Naive thymus-derived CD4-positive, alpha-beta T cell (primary cell): ENCODE measurements at regions of chr14 and their contacts with region 1.

Region 1: DNA sequence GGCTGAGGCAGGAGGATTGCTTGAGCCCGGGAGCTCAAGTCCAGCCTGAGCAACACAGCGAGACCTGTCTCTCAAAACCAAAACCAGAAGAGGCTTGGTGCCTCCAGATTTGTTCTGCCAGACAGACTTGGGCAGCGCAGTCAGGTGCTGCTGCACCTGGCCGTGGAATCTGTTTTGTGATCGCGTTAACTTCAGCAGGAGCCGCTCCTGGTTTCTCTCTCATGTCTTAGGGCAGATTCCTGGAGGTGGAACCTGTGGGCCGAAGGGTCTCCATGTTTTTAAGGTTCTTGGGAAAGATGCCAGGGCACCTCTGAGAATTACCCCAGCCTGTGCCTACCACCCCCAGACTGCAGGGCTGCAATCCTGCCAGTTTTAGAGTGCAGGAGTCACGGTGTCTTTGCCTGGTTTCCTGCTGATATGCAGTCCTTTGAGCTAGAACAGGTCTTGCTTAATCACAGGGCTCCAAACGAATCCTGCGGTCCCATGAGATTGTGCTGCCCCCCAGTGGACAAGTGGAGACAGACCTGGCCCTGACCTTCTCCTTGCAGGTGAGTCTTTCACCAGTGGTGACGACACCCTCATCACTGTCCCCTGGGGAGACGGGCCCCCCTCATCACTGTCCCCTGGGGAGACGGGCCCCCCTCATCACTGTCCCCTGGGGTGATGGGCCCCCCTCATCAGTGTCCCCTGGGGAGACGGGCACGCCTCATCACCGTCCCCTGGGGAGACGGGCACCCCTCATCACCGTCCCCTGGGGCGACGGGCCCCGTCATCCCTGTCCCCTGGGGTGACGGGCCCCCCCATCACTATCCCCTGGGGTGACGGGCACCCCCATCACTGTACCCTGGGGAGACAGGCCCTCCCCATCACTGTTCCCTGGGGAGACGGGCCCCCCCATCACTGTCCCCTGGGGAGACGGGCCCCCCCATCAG is 37.6 kb downstream of the PACS2 start:
- DNase-seq: peak; percentile 71 to 90 (median 87)
- ATAC-seq: peak; percentile 97
- H3K4me3 ChIP-seq: no peak overlapping the region
- H3K4me3 Mint-ChIP-seq: no peak overlapping the region
- H3K27ac ChIP-seq: no peak overlapping the region
- H3K27ac Mint-ChIP-seq: peak overlapping the region in 1 of 9 donors; percentile 56
- H3K4me1 ChIP-seq: peaks cover 0 to 4% of the 10 kb centered on the region in 2 donors
- H3K4me1 Mint-ChIP-seq: peaks cover 4 to 5% (median 4%) of the 10 kb centered on the region in 7 donors
- H3K27me3 ChIP-seq: no peaks in the 10 kb centered on the region
- H3K27me3 Mint-ChIP-seq: no peaks in the 10 kb centered on the region

Region 2: DNA sequence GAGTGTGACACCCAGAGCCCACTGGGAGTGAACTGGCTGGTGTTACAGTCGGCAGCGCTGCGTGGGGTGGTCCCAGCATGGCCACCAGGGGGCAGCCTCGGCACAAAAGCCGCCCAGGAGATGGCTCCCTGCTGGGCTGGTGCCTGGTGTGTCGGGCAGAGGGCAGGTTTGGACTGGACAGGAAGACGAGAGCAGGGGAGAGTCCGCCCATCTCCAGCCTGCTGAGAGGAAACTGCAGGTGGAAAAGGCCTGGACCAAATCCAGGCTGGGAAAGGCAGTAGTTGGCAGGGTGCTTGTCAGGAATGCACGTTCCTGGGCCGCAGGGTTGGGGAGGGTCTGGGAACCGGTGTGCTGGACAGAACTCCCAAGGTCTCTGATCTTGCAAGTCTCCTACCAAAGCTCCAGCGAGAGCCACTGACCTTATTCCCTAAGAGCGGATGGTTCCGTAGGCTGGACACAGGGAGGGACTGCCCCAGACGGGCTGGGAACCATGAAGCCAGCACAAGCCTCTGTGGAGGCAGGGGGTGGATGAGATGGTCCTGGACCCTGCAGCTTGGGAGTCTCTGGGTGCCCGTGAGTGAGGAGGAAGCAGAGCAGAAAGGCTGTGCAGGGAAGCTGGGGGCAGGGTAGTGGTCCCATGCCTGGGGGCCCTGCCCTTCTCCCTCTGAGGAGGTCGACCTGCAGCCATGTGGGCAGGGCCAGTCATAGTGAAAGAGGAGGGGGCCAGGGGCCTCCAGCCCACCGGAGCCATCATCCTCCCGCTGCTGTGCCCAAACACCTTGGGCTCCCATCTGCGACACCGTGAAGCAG is 375.8 kb before region 1 on chr14:
- CTCF ChIA-PET with region 1: no interaction called
- POLR2A ChIA-PET with region 1: no interaction called
- intact Hi-C with region 1: loop called in 1 of 2 experiments (anchors 1 kb)
- DNase-seq: peak; percentile 67 to 91 (median 83)
- ATAC-seq: peak; percentile 86
- H3K4me3 ChIP-seq: no peak overlapping the region
- H3K4me3 Mint-ChIP-seq: peak overlapping the region; percentile 41 to 92 (median 72)
- H3K27ac ChIP-seq: no peak overlapping the region
- H3K27ac Mint-ChIP-seq: peak overlapping the region in 4 of 9 donors; percentile 3 to 68 (median 33)
- H3K4me1 ChIP-seq: peaks cover 0 to 7% of the 10 kb centered on the region in 2 donors
- H3K4me1 Mint-ChIP-seq: peaks cover 5 to 19% (median 13%) of the 10 kb centered on the region in 7 donors
- H3K27me3 ChIP-seq: peaks cover 0 to 8% of the 10 kb centered on the region in 2 donors
- H3K27me3 Mint-ChIP-seq: peaks cover 8 to 33% (median 16%) of the 10 kb centered on the region in 5 donors

Region 3: DNA sequence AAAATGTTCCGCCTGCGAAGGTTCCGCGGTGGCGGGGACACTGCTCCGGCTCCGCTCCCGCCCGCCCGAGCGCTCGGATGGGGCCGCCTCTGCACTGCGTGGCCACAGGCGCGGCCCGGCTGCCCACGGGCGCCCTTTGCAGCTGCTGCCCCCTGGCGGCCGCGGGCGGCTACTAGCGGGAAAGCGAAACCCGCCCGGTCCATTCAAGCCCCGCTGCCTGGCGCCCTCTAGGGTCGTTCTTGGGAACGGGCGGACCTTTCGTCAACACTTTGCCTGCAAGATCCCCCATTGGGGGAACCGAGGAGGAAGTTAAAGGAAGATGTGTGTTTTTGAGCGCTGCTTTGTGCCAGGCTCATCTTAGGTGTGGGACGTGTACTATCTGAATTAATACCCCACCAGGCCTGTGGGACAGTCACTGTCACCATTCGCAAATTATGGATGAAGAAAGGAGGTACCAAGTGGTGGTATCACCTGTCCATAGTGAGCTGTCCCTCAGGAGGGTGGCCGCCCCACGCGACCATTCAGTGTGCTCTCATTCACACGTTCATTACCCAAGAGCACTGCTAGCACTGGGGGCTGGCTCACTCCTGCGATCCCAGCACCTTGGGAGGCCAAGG is 306.4 kb before region 1 on chr14:
- CTCF ChIA-PET with region 1: no interaction called
- POLR2A ChIA-PET with region 1: no interaction called
- intact Hi-C with region 1: loop called in 1 of 2 experiments (anchors 5 kb)
- DNase-seq: peak; percentile 83 to 96 (median 89)
- ATAC-seq: peak; percentile 98
- H3K4me3 ChIP-seq: no peak overlapping the region
- H3K4me3 Mint-ChIP-seq: peak overlapping the region in 7 of 10 donors; percentile 16 to 56 (median 44)
- H3K27ac ChIP-seq: peak overlapping the region; percentile 46
- H3K27ac Mint-ChIP-seq: peak overlapping the region; percentile 11 to 92 (median 87)
- H3K4me1 ChIP-seq: peaks cover 0 to 9% of the 10 kb centered on the region in 2 donors
- H3K4me1 Mint-ChIP-seq: peaks cover 5 to 14% (median 10%) of the 10 kb centered on the region in 7 donors
- H3K27me3 ChIP-seq: no peaks in the 10 kb centered on the region
- H3K27me3 Mint-ChIP-seq: peaks cover 0 to 7% (median 0%) of the 10 kb centered on the region in 5 donors

Region 4: GRCh38 chr14:105203057-105203531 is 149.1 kb before region 1 on chr14:
- CTCF ChIA-PET with region 1: interaction called, 4 read pairs
- POLR2A ChIA-PET with region 1: no interaction called
- intact Hi-C with region 1: loop called (anchors 1 kb)
- DNase-seq: peak in 6 of 9 donors; percentile 30 to 75 (median 58)
- ATAC-seq: peak; percentile 58
- H3K4me3 ChIP-seq: no peak overlapping the region
- H3K4me3 Mint-ChIP-seq: no peak overlapping the region
- H3K27ac ChIP-seq: no peak overlapping the region
- H3K27ac Mint-ChIP-seq: no peak overlapping the region
- H3K4me1 ChIP-seq: peaks cover 0 to 18% of the 10 kb centered on the region in 2 donors
- H3K4me1 Mint-ChIP-seq: peaks cover 9 to 15% (median 13%) of the 10 kb centered on the region in 7 donors
- H3K27me3 ChIP-seq: peaks cover 0 to 2% of the 10 kb centered on the region in 2 donors
- H3K27me3 Mint-ChIP-seq: peaks cover 6 to 26% (median 12%) of the 10 kb centered on the region in 5 donors

Region 5: GRCh38 chr14:105314287-105315200 is 37.6 kb before region 1 on chr14 and contains the start of gene PACS2:
- CTCF ChIA-PET with region 1: no interaction called
- POLR2A ChIA-PET with region 1: no interaction called
- intact Hi-C with region 1: loop called in 1 of 2 experiments (anchors 1 kb)
- DNase-seq: peak; percentile 64 to 90 (median 86)
- ATAC-seq: peak; percentile 89
- H3K4me3 ChIP-seq: peak within 1 kb of the TSS; percentile 57
- H3K4me3 Mint-ChIP-seq: peak within 1 kb of the TSS; percentile 80 to 98 (median 89)
- H3K27ac ChIP-seq: peak within 1 kb of the TSS; percentile 68
- H3K27ac Mint-ChIP-seq: peak within 1 kb of the TSS; percentile 74 to 95 (median 89)
- H3K4me1 ChIP-seq: peaks cover 13 to 21% of the 10 kb centered on the region in 2 donors
- H3K4me1 Mint-ChIP-seq: peaks cover 9 to 35% (median 23%) of the 10 kb centered on the region in 7 donors
- H3K27me3 ChIP-seq: no peaks in the 10 kb centered on the region
- H3K27me3 Mint-ChIP-seq: peaks cover 0 to 9% (median 0%) of the 10 kb centered on the region in 5 donors
- total RNA-seq, gene PACS2: 33.9 to 75.4 (median 72.3) TPM

Region 6: GRCh38 chr14:105398044-105398725 is 46.0 kb after region 1 on chr14 and contains the start of gene TEX22:
- CTCF ChIA-PET with region 1: no interaction called
- POLR2A ChIA-PET with region 1: no interaction called
- intact Hi-C with region 1: no loop called
- DNase-seq: peak; percentile 75 to 98 (median 84)
- ATAC-seq: peak; percentile 93
- H3K4me3 ChIP-seq: peak within 1 kb of the TSS; percentile 63
- H3K4me3 Mint-ChIP-seq: peak within 1 kb of the TSS; percentile 78 to 95 (median 83)
- H3K27ac ChIP-seq: peak within 1 kb of the TSS; percentile 87
- H3K27ac Mint-ChIP-seq: peak within 1 kb of the TSS; percentile 57 to 95 (median 86)
- H3K4me1 ChIP-seq: peaks cover 20 to 25% of the 10 kb centered on the region in 2 donors
- H3K4me1 Mint-ChIP-seq: peaks cover 6 to 29% (median 18%) of the 10 kb centered on the region in 7 donors
- H3K27me3 ChIP-seq: no peaks in the 10 kb centered on the region
- H3K27me3 Mint-ChIP-seq: no peaks in the 10 kb centered on the region
- total RNA-seq, gene TEX22: 1.4 to 10.5 (median 6.5) TPM